Activated CD4-positive, alpha-beta T cell treated with anti-CD3 and anti-CD28 coated beads, Interleukin-2, amount 10 ng/mL, durations not matched to agents 24 days and 14 days (primary cell): ENCODE measurements at regions of chr2 and their contacts with region 1.

Region 1: DNA sequence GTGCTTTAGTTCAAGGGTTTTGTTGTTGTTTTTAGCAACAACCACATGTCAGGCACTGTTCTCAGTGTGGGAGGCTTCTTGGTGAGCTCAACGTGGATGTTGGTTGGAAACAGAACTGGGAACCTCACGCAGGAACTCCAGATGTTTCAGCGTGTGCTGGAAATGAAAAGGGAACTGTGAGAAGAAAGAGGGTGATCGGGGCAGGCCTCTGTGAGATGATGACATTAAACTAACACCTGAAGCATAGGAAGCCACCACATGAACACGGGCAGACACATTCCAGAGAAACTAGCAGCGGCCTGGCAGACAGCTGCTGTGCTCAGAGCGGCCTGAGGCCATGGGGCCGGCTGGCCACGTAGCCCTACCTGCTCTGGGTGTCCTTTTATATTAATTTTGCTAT is 66.4 kb downstream of the COA5 start:
- DNase-seq: peak; percentile 41
- H3K4me3 Mint-ChIP-seq: no peak overlapping the region
- H3K27ac Mint-ChIP-seq: peak overlapping the region; percentile 42
- H3K4me1 Mint-ChIP-seq: peaks cover 30% of the 10 kb centered on the region
- H3K27me3 Mint-ChIP-seq: no peaks in the 10 kb centered on the region

Region 2: GRCh38 chr2:98552499-98553179 is 10.7 kb after region 1 on chr2:
- intact Hi-C with region 1: loop called (anchors 1 kb)
- DNase-seq: no peak
- H3K4me3 Mint-ChIP-seq: no peak overlapping the region
- H3K27ac Mint-ChIP-seq: peak overlapping the region; percentile 54
- H3K4me1 Mint-ChIP-seq: peaks cover 68% of the 10 kb centered on the region
- H3K27me3 Mint-ChIP-seq: no peaks in the 10 kb centered on the region